BJ (cell line): ENCODE measurements at regions of chr6 and their contacts with region 1.

Region 1: DNA sequence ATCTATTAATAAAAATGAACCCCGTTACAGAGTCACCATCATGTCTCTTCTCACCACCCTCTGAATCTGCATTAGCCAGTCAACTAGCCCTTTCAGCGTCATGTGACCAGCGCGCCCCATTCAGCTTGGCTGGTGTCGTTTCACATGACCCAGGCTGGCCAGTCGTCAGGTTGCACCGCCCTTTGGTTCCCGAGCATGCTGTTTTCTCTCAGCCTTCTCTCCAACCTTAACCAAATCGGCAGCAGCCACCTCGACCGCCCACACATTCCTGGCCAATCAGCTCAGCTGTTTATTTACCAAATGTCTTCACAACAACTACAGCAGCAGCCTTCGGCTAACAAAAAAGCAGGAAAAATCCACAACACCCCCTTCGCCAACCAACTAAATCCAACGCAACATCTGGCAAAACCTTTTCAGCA is 5.6 kb downstream of the SRSF3 start:
- DNase-seq: no peak
- H3K4me3 ChIP-seq: peak overlapping the region; percentile 24
- H3K27me3 ChIP-seq: no peaks in the 10 kb centered on the region
- CTCF ChIP-seq: no peak

Region 2: DNA sequence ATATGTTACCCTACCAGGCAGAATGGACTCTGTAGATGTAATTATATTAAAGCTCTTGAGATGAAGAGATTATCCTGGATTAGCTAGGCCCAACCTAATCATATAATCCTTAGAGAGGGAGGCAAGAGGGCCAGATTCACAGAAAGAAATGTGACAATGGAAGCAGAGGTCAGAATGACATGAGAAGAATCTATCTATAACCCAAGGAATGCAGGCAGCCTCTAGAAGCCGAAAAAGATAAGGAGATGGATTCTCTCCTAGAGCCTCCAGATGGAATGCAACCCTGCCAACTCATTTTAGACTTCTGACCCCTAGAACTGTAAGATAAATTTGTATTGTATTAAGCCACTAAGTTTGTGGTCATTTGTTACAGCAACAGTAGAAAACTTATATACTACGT is 169.4 kb before region 1 on chr6:
- CTCF ChIA-PET with region 1: no interaction called
- POLR2A ChIA-PET with region 1: interaction called, 11 read pairs
- DNase-seq: no peak
- H3K4me3 ChIP-seq: no peak overlapping the region
- H3K27me3 ChIP-seq: no peaks in the 10 kb centered on the region
- CTCF ChIP-seq: no peak

Region 3: GRCh38 chr6:36445621-36446020 is 154.2 kb before region 1 on chr6:
- CTCF ChIA-PET with region 1: no interaction called
- POLR2A ChIA-PET with region 1: interaction called, 11 read pairs
- DNase-seq: no peak
- H3K4me3 ChIP-seq: no peak overlapping the region
- H3K27me3 ChIP-seq: no peaks in the 10 kb centered on the region
- CTCF ChIP-seq: no peak

Region 4: GRCh38 chr6:36478051-36478526 is 121.7 kb before region 1 on chr6:
- CTCF ChIA-PET with region 1: no interaction called
- POLR2A ChIA-PET with region 1: interaction called, 10 read pairs
- DNase-seq: no peak
- H3K4me3 ChIP-seq: no peak overlapping the region
- H3K27me3 ChIP-seq: no peaks in the 10 kb centered on the region
- CTCF ChIP-seq: no peak

Region 5: DNA sequence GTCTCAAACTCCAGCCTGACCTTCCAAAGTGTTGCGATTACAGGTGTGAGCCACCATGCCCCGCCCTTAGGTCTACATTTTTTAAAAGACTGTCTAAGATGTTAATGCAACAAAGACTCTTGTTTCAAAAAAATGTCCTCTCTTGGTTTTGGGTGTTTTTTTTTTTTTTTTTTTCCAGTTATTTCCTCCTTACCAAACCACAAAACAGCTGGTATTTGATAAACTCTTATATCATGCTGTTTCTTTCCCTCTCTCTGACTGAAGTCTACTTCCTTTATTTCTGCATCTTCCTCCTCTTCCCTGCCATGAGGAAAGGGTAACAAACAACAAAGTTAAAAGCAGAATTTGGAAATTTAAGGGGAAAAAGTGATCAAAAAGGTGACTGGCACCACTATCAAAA is 73.7 kb before region 1 on chr6:
- CTCF ChIA-PET with region 1: no interaction called
- POLR2A ChIA-PET with region 1: interaction called, 11 read pairs
- DNase-seq: no peak
- H3K4me3 ChIP-seq: no peak overlapping the region
- H3K27me3 ChIP-seq: no peaks in the 10 kb centered on the region
- CTCF ChIP-seq: no peak

Region 6: DNA sequence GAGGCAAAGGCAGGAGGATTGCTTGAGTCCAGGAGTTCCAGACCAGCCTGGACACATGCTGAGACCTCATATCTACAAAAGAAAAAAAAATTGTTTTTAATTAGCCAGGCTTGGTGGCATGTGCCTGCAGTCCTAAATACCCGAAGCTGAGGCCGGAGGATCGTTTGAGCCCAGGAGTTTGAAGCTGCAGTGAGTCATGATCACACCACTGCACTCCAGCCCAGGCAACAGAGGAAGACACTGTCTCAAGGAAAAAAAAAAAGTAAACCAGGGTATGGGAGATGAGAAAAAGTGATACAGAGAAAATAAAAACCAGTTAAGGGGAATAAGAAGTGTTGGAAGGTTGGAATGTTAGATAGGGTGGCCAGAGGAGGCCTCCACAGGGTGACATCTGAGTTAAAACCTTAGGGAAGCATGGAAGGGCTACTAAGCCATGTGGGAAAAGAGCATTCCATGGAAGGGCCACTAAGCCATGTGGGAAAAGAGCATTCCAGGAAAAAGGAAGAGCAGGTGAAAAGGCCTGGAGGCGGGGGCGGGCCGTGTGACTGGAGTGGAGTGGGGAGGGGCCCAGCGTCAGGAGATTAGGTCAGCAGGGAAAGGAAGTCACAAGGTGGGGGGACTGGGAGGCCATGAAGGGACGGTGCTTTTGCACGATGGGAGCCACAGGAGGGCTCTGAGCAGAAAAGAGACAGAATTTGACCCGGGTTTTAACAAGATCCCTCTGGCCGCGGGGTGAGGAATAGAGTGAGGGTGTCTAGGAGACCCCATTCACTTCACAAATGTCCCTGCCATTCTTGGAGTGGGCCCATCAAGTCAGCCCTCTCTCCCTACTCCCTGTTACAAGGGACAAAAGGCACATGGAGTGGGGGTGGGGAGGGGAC is 221.1 kb after region 1 on chr6:
- CTCF ChIA-PET with region 1: no interaction called
- POLR2A ChIA-PET with region 1: no interaction called
- DNase-seq: peak; percentile 23
- H3K4me3 ChIP-seq: no peak overlapping the region
- H3K27me3 ChIP-seq: no peaks in the 10 kb centered on the region; the same call in 1 of the 2 replicates
- CTCF ChIP-seq: no peak